ENCODE measurements at regions of chr7 and their contacts with region 1.

Region 1: GRCh38 chr7:16619979-16620408 is 25.6 kb downstream of the ANKMY2 start:
- DNase-seq: peak; percentile 37
- ATAC-seq: peak; percentile 96
- H3K4me3 Mint-ChIP-seq: peak overlapping the region; percentile 8
- H3K27ac Mint-ChIP-seq: peak overlapping the region; percentile 87
- H3K4me1 Mint-ChIP-seq: peaks cover 21% of the 10 kb centered on the region
- H3K27me3 Mint-ChIP-seq: no peaks in the 10 kb centered on the region
- CTCF ChIP-seq: no peak

Region 2: DNA sequence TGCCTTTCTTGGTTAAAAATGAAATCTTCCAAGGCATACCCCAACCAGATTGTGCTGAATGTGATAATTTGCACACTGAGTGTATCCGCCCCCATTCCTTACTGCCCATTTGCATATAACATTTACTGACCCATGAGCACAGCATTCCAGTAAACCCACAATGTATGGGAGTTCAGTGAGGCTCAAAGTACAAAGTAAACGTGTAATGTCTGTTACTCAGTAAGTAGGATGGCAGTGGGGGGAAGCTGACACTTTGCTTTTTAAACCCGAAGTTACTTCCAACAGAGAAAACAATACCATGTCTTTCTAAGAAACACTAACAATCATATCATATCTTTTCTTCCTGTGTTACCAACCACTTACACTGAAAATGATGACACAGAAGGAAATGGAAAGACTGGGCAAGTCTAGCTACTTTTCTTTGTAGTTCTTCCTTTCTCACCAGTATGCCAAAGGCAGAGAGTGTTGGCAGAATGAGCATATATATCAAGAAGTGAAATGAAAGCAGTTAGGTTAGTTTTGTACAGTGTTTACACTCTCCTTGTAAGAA is 127.4 kb before region 1 on chr7:
- CTCF ChIA-PET with region 1: no interaction called
- POLR2A ChIA-PET with region 1: no interaction called
- intact Hi-C with region 1: no loop called
- DNase-seq: peak; percentile 34
- ATAC-seq: peak; percentile 89
- H3K4me3 Mint-ChIP-seq: no peak overlapping the region
- H3K27ac Mint-ChIP-seq: no peak overlapping the region
- H3K4me1 Mint-ChIP-seq: peaks cover 7% of the 10 kb centered on the region
- H3K27me3 Mint-ChIP-seq: peaks cover 3% of the 10 kb centered on the region
- CTCF ChIP-seq: no peak

Region 3: DNA sequence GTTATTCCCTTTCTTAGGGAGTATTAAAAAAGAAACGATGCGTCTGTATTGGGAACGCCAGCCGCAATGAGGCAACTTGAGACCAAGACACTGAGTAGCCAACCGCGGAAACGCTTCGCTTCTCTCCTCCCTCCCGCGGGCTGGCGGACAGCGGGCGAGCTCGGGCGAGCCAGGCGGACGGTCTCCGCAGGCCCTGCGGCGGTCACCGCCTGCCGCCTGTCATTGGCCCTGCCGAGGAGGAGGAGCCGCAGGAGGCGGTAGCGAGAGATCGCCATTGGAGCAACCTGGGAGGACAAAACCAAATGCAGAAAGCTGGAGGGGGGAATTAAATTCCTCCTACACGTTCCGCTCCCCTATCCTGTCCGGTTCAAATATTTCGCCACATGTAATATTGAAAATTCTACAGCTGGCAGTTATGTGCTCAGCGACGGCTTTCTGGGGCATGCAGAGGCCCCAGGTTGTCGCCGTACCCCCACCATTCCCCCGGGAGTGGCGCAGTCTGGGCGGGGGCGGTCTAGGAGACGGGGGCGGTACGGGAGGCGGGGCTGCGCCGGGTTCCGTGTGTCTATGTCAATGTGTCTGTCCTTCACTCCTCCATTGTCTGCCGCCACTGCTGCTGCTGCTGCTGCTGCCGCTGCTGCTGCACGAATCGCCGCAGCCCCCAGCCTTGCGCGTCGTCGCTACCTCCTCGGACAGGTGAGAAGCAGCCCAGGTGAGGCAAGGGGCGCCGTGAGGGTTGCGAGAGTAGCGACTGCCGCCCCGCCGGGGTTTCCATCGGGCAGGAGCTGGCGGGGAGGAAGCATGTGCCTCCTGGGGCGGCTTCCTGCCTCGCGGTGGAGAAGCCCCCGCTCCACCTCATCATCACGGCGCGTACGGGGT is 25.8 kb after region 1 on chr7 and contains the starts of genes ANKMY2 and BZW2:
- CTCF ChIA-PET with region 1: interaction called, 5 read pairs
- POLR2A ChIA-PET with region 1: interaction called, 29 read pairs
- intact Hi-C with region 1: no loop called
- DNase-seq: peak; percentile 93
- ATAC-seq: peak; percentile 91
- H3K4me3 Mint-ChIP-seq: peak within 1 kb of the TSS; percentile 93
- H3K27ac Mint-ChIP-seq: peak within 1 kb of the TSS; percentile 94
- H3K4me1 Mint-ChIP-seq: peaks cover 52% of the 10 kb centered on the region
- H3K27me3 Mint-ChIP-seq: no peaks in the 10 kb centered on the region
- CTCF ChIP-seq: no peak
- total RNA-seq, gene ANKMY2: 9.8 to 10.5 TPM
- total RNA-seq, gene BZW2: 120 to 123 TPM

Region 4: GRCh38 chr7:16668049-16668858 is 48.3 kb after region 1 on chr7:
- CTCF ChIA-PET with region 1: no interaction called
- POLR2A ChIA-PET with region 1: no interaction called
- intact Hi-C with region 1: loop called (anchors 2 kb)
- DNase-seq: no peak
- ATAC-seq: no peak
- H3K4me3 Mint-ChIP-seq: no peak overlapping the region
- H3K27ac Mint-ChIP-seq: no peak overlapping the region
- H3K4me1 Mint-ChIP-seq: peaks cover 34% of the 10 kb centered on the region
- H3K27me3 Mint-ChIP-seq: no peaks in the 10 kb centered on the region
- CTCF ChIP-seq: no peak

Region 5: DNA sequence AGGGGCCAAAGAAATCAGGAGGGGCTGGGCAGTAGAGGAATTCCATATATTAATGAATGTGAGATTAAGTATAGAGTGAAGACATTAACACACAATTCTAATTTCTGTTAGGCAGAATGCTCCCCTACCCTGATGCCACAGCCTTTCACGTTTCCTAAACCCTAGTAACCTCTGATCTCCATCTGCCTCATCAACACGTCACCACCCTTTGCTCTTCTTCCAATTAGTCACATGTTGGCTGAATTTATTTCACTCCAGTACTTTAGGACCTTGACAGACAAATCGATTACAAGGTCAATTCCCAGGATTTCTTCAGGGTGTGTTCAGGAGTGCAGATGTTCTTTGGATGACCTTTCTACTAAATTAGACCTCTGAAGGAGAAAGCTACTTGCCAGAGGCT is 171.9 kb after region 1 on chr7:
- CTCF ChIA-PET with region 1: no interaction called
- POLR2A ChIA-PET with region 1: no interaction called
- intact Hi-C with region 1: no loop called
- DNase-seq: no peak
- ATAC-seq: no peak
- H3K4me3 Mint-ChIP-seq: no peak overlapping the region
- H3K27ac Mint-ChIP-seq: no peak overlapping the region
- H3K4me1 Mint-ChIP-seq: no peaks in the 10 kb centered on the region
- H3K27me3 Mint-ChIP-seq: peaks cover 10% of the 10 kb centered on the region
- CTCF ChIP-seq: no peak